Aorta (tissue), 5 donors: ENCODE measurements at regions of chr3 and their contacts with region 1.

Region 1: GRCh38 chr3:7546253-7546652 is 685.3 kb downstream of the GRM7 start:
- DNase-seq: no peak
- ATAC-seq: no peak
- H3K4me3 ChIP-seq: no peak overlapping the region
- H3K27ac ChIP-seq: no peak overlapping the region
- H3K4me1 ChIP-seq: peaks cover 0 to 4% of the 10 kb centered on the region in 2 donors
- H3K27me3 ChIP-seq: no peaks in the 10 kb centered on the region

Region 2: GRCh38 chr3:7798276-7798675 is 252.0 kb after region 1 on chr3:
- intact Hi-C with region 1: loop called in 1 of 2 experiments (anchors 10 kb)
- DNase-seq: no peak
- ATAC-seq: no peak
- H3K4me3 ChIP-seq: no peak overlapping the region
- H3K27ac ChIP-seq: no peak overlapping the region
- H3K4me1 ChIP-seq: no peaks in the 10 kb centered on the region
- H3K27me3 ChIP-seq: no peaks in the 10 kb centered on the region